ENCODE measurements at regions of chr1 and their contacts with region 1.

Region 1: GRCh38 chr1:179058487-179059483 is 23.1 kb upstream of the TOR3A start:
- DNase-seq: no peak
- ATAC-seq: no peak
- H3K4me3 ChIP-seq: no peak overlapping the region
- H3K27ac ChIP-seq: no peak overlapping the region
- H3K4me1 ChIP-seq: peaks cover 0 to 10% (median 0%) of the 10 kb centered on the region in 9 donors
- H3K27me3 ChIP-seq: no peaks in the 10 kb centered on the region
- CTCF ChIP-seq: no peak

Region 2: DNA sequence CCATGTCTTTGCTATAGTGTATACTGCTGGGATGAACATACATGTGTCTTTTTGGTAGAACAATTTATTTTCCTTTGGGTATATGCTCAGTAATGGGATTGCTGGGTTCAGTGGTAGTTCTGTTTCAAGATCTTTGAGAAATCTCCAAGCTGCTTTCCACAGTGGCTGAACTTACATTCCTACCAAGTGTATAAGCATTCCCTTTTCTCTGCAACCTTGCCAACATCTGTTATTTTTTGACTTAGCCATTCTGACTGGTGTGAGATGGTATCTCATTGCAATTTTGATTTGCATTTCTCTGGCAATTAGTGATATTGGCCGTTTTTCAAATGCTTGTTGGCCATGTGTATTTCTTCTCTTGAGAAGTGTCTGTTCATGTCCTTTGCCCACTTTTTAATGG is 150.4 kb before region 1 on chr1:
- intact Hi-C with region 1: no loop called
- DNase-seq: no peak
- ATAC-seq: no peak
- H3K4me3 ChIP-seq: no peak overlapping the region
- H3K27ac ChIP-seq: no peak overlapping the region
- H3K4me1 ChIP-seq: no peaks in the 10 kb centered on the region
- H3K27me3 ChIP-seq: no peaks in the 10 kb centered on the region
- CTCF ChIP-seq: no peak

Region 3: DNA sequence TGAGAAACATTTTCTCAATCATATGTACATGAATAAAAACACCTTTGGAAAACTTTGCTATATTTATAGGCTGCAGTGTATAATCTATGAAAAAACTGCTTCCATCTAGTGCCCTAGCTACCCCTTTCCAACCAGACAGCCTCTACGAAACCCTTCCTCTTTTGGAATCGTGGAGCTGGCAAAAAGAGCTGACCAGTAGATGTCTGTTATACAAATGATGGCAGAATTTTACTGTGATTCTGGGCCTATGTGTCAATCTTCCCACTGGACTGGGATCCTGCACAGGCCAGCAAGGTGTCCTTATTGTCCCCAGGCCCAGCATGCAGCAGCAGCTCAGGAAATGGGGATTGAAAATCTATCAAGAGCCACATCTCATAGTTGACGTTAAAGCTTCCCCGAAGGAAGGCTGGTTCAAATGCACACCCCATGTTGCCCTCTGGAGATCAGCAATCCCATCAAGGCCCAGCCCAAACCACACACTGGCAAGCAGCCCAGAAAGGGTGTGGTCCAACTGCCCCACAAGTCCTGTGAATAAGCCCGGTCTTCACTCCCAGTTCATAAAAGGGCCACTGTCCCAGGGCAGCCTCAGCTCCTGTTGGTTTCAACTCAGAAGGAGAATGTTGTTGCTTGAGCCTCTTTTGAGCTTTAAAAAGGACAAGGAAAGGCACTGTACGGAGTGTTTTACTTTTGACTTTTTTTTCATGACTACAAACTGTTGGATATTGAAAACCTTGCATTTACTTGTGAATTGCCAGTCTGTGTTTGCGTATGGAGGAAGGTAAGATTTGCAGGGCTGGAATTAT is 41.8 kb before region 1 on chr1:
- intact Hi-C with region 1: no loop called
- DNase-seq: peak; percentile 81 to 83
- ATAC-seq: peak; percentile 69 to 91 (median 88)
- H3K4me3 ChIP-seq: no peak overlapping the region
- H3K27ac ChIP-seq: peak overlapping the region in 5 of 10 donors; percentile 27 to 48 (median 36)
- H3K4me1 ChIP-seq: peaks cover 0 to 21% (median 15%) of the 10 kb centered on the region in 9 donors
- H3K27me3 ChIP-seq: no peaks in the 10 kb centered on the region
- CTCF ChIP-seq: no peak

Region 4: DNA sequence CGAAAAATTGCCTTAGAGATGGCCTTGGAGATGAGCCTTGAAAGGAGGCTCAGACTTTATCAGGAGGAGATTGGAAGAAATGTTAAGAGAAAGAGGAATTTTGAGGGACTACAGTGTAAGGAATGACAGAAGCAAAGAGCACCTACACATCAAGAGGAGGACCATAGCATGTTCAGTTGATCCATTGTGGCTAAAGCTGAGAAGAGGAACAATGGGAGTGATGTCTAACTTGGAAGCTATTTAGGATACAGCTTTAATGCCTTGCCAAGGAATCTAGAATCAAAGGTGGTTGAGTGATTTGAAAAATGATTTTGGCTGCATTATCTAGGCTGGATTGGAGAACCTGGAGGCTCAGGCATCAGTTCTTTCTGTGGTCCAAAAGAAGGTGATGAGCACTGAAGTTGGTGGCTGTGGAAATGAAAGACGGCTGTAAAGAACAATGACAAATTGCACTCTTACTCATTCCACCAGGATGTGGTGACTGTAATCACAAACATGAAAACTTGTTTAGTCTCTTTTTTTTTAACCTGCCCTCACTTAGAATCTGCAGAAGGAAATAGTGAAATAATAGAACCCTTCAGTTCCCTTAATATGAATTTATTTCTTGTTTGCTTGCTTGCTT is 21.8 kb before region 1 on chr1:
- intact Hi-C with region 1: loop called in 1 of 10 experiments (anchors 1 kb)
- DNase-seq: no peak
- ATAC-seq: no peak
- H3K4me3 ChIP-seq: no peak overlapping the region
- H3K27ac ChIP-seq: no peak overlapping the region
- H3K4me1 ChIP-seq: peaks cover 0 to 69% (median 50%) of the 10 kb centered on the region in 9 donors
- H3K27me3 ChIP-seq: no peaks in the 10 kb centered on the region
- CTCF ChIP-seq: no peak